IMR-90 (cell line): ENCODE measurements at regions of chr4 and their contacts with region 1.

Region 1: DNA sequence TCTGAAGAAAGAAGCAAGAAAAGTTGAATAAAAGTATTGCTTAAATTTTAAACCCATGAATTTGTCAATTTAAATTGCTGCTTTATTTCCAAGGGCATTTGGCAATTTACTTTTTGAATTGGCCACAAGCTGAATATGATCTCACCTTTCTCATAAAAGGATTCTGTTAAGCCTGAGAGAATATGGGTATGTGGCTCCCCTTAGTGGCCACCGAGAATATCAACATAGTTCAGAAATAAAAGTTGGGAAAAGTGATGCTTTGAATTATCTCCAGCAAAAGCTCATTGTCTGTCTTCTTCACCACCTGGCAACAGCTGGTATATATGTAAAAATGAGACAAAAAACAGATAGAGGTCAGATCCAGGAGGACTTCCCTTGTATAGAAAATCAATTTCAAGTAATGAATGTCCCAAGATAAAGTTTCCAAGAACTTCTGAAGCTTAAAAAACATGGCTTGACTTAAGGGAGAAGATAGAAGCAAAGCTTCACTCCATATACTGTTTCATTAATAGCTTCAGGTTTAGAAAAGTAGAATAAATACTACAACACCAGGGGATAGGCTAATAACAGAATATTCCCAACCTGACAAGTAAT is 290.7 kb upstream of the FAM241A start:
- DNase-seq: peak; percentile 30
- ATAC-seq: peak; percentile 69
- H3K4me3 ChIP-seq: no peak overlapping the region
- H3K27ac ChIP-seq: no peak overlapping the region
- H3K4me1 ChIP-seq: no peaks in the 10 kb centered on the region
- H3K27me3 ChIP-seq: no peaks in the 10 kb centered on the region
- CTCF ChIP-seq: peak; percentile 64
- POLR2A ChIP-seq: no peak
- RAD21 ChIP-seq: peak; percentile 63

Region 2: DNA sequence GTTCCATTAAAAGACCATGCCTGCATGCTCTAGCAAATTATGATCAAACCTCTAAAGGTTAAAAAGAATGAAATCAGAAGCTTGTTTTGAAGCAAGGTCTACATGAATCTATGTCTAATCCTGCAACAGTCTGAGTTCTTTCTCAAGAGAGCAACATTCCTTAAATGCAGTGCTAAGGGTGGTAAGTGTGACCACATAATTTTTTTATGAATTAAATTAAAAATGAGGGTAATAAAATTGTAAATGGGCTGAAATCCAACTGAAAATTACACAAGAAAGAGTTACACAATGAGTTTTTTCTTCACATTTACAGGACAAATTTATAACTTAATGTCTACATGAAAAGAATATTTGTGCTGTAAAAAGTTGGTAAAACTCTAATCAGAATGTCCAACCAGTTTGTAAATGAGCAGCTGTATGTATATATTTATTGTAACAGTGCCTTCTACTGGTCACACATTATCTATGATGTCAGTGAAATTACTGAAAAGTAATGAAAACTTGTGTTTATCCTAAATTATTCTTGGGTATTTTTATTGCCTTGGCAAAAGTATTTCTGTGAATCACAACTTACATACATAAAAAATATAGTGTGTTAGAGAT is 895.4 kb before region 1 on chr4:
- CTCF ChIA-PET with region 1: no interaction called
- POLR2A ChIA-PET with region 1: no interaction called
- dilution Hi-C with region 1: no loop called
- in situ Hi-C with region 1: no loop called
- intact Hi-C with region 1: loop called (anchors 10 kb)
- DNase-seq: peak; percentile 30
- ATAC-seq: peak; percentile 66; the same call in 1 of the 2 replicates
- H3K4me3 ChIP-seq: no peak overlapping the region
- H3K27ac ChIP-seq: no peak overlapping the region
- H3K4me1 ChIP-seq: no peaks in the 10 kb centered on the region
- H3K27me3 ChIP-seq: peaks cover 2% of the 10 kb centered on the region; the same call in 1 of the 2 replicates
- CTCF ChIP-seq: peak; percentile 50
- POLR2A ChIP-seq: no peak
- RAD21 ChIP-seq: peak; percentile 48

Region 3: DNA sequence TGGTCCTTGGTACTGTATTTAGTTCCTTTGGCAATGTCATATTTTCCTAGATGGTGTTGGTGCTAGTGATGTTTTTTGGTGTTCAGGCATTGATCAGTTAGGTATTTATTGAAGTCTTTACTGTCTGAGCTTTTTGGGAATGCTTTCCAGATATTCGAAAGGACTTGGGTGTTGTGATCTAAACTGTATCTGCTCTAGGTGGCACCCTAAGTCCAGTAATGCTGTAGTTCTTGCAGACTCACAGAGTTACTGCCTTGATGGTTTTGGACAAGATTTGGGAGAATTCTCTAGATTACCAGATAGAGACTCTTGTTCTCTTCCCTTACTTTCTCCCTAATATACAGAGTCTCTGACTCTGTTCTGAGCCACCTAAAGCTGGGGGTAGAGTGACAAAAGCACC is 718.2 kb before region 1 on chr4:
- CTCF ChIA-PET with region 1: no interaction called
- POLR2A ChIA-PET with region 1: no interaction called
- dilution Hi-C with region 1: no loop called
- in situ Hi-C with region 1: no loop called
- intact Hi-C with region 1: loop called (anchors 5 kb)
- DNase-seq: peak; percentile 59
- ATAC-seq: peak; percentile 73
- H3K4me3 ChIP-seq: no peak overlapping the region
- H3K27ac ChIP-seq: no peak overlapping the region
- H3K4me1 ChIP-seq: no peaks in the 10 kb centered on the region
- H3K27me3 ChIP-seq: no peaks in the 10 kb centered on the region
- CTCF ChIP-seq: peak; percentile 60
- POLR2A ChIP-seq: no peak
- RAD21 ChIP-seq: peak; percentile 75

Region 4: DNA sequence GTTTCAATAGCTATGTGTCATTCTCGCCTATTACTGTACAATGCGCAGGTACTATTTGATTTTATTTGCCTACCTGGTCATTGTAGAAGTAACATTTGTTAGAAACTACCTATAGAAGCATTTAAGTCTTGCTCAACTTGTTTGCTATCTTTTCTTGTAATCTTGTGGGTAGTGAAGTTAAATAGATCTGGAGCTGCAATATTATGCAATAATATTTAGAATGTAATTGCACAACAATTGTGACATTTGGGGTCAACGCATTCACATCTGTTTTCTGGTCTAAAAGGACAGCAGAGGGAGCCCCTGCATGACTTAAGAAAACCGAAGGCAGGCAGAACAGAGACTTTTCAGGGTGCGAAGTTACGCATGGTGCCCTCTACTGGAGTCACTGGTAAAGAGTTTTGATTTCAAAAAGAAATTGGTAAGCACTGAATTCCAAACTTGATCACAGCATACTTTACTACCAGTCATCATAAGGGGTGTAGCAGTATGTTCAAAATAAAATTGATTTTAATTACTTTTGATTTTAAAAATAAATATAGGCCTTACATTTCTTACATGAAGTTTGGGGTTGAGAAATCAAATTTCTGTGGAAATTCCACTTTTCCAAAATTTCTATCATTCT is 212.5 kb before region 1 on chr4:
- CTCF ChIA-PET with region 1: interaction called, 4 read pairs
- POLR2A ChIA-PET with region 1: no interaction called
- dilution Hi-C with region 1: no loop called
- in situ Hi-C with region 1: loop called (anchors 10 kb)
- intact Hi-C with region 1: loop called (anchors 1 kb)
- DNase-seq: peak; percentile 86
- ATAC-seq: peak; percentile 91
- H3K4me3 ChIP-seq: no peak overlapping the region
- H3K27ac ChIP-seq: no peak overlapping the region
- H3K4me1 ChIP-seq: no peaks in the 10 kb centered on the region; the same call in 1 of the 2 replicates
- H3K27me3 ChIP-seq: no peaks in the 10 kb centered on the region
- CTCF ChIP-seq: peak; percentile 94
- POLR2A ChIP-seq: no peak
- RAD21 ChIP-seq: peak; percentile 63

Region 5: DNA sequence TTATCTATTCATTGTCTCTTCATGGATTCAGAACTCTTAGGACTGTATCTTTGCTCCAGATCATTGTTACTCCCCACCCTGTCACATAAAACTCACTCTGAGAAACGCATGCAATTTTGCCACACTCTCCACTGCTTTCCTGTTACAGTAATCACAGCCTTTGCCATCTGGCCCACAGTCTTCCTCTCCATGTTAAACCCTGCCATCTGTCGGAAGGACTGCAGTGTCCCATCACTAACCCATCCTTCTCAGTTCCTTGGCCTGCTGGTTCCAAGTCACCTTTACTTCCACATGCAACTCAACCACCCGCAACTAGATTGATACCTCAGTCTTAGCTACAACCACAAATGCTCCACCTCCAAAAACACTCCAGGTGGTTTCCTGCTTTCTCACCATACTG is 18.0 kb before region 1 on chr4:
- CTCF ChIA-PET with region 1: interaction called, 11 read pairs
- POLR2A ChIA-PET with region 1: no interaction called
- dilution Hi-C with region 1: no loop called
- in situ Hi-C with region 1: no loop called
- intact Hi-C with region 1: no loop called
- DNase-seq: no peak
- ATAC-seq: no peak
- H3K4me3 ChIP-seq: no peak overlapping the region
- H3K27ac ChIP-seq: no peak overlapping the region
- H3K4me1 ChIP-seq: no peaks in the 10 kb centered on the region
- H3K27me3 ChIP-seq: no peaks in the 10 kb centered on the region
- CTCF ChIP-seq: no peak
- POLR2A ChIP-seq: no peak
- RAD21 ChIP-seq: no peak

Region 6: DNA sequence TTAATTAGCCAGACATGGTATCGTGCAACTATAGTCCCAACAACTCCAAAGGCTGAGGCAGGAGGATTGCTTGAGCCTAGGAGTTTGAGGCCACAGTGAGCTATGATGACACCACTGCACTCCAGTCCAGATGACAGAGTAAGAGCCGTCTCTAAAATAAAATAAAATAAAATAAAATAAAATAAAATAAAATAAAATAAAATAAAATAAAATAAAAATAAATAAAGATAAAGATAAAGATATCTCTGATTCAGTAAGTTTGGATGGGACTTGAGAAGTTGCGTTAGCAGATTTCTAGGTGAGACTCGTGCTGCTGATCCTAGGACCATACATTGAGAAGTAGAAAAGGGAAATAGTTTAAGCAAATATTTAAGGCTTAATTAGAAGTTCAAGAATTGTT is 35.8 kb after region 1 on chr4:
- CTCF ChIA-PET with region 1: no interaction called
- POLR2A ChIA-PET with region 1: no interaction called
- dilution Hi-C with region 1: no loop called
- in situ Hi-C with region 1: no loop called
- intact Hi-C with region 1: no loop called
- DNase-seq: no peak
- ATAC-seq: no peak
- H3K4me3 ChIP-seq: no peak overlapping the region
- H3K27ac ChIP-seq: no peak overlapping the region
- H3K4me1 ChIP-seq: no peaks in the 10 kb centered on the region
- H3K27me3 ChIP-seq: no peaks in the 10 kb centered on the region
- CTCF ChIP-seq: no peak
- POLR2A ChIP-seq: no peak
- RAD21 ChIP-seq: no peak

Region 7: DNA sequence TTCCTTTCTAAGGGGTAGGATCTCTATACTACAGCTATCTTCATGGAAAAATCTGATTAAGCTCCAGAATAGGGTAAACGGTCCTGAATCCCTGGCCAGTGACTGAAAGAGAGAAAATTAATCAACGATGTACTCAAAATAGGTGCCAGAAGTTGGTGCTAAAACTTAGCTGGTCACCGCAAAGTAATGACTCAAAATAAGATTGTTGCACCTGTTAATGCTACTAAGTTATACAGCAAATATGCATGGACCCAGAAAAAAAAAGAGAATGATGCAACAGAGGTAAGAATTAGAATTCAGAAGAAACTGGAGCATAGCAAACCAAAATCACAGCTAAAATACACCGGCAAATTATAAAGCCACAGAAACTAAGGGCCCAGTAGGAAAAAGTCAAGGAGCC is 50.9 kb after region 1 on chr4:
- CTCF ChIA-PET with region 1: no interaction called
- POLR2A ChIA-PET with region 1: no interaction called
- dilution Hi-C with region 1: no loop called
- in situ Hi-C with region 1: no loop called
- intact Hi-C with region 1: no loop called
- DNase-seq: no peak
- ATAC-seq: no peak
- H3K4me3 ChIP-seq: no peak overlapping the region
- H3K27ac ChIP-seq: no peak overlapping the region
- H3K4me1 ChIP-seq: no peaks in the 10 kb centered on the region
- H3K27me3 ChIP-seq: no peaks in the 10 kb centered on the region
- CTCF ChIP-seq: no peak
- POLR2A ChIP-seq: no peak
- RAD21 ChIP-seq: no peak

Region 8: DNA sequence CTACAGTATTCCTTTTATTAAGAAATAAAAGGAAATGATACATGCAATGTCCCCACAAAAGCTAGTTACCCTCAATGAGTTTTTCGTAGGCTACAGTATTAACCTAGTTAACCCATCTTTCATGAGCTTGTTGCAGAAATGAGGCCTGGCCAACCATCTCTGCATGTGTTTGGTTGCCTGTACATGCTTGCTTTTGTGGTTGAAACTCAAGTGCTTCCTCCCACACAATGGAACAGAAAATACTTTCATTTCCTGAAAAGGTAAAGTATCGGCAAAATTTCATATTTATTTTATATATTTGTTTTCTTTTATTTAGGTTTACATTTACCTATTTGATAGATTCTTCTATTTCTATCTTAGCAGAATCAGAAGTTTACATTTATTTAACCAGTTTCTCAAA is 76.1 kb after region 1 on chr4:
- CTCF ChIA-PET with region 1: no interaction called
- POLR2A ChIA-PET with region 1: no interaction called
- dilution Hi-C with region 1: no loop called
- in situ Hi-C with region 1: no loop called
- intact Hi-C with region 1: no loop called
- DNase-seq: no peak
- ATAC-seq: no peak
- H3K4me3 ChIP-seq: no peak overlapping the region
- H3K27ac ChIP-seq: no peak overlapping the region
- H3K4me1 ChIP-seq: no peaks in the 10 kb centered on the region
- H3K27me3 ChIP-seq: no peaks in the 10 kb centered on the region
- CTCF ChIP-seq: no peak
- POLR2A ChIP-seq: no peak
- RAD21 ChIP-seq: no peak

Region 9: DNA sequence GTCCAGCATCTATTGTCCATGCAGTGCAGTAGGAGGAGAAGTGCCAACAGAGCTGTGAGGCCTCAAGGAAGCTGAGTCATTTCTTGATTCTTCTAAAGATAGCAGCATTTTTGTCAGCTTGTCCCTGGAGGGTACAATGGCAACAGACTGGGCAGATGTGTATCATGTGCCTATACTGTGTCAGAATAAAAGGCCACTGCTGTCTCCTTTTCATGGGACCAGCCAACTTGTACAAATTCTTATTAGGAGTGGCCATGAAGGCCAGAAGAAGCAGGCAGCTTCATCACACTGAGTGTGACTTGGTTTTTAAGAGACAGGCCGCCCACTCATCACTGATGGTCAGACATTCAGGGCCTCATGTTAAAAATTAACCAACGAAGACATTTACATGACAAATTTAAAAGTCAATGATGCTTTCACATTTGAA is 105.7 kb after region 1 on chr4:
- CTCF ChIA-PET with region 1: no interaction called
- POLR2A ChIA-PET with region 1: no interaction called
- dilution Hi-C with region 1: no loop called
- in situ Hi-C with region 1: no loop called
- intact Hi-C with region 1: no loop called
- DNase-seq: no peak
- ATAC-seq: no peak
- H3K4me3 ChIP-seq: no peak overlapping the region
- H3K27ac ChIP-seq: no peak overlapping the region
- H3K4me1 ChIP-seq: no peaks in the 10 kb centered on the region
- H3K27me3 ChIP-seq: no peaks in the 10 kb centered on the region
- CTCF ChIP-seq: no peak
- POLR2A ChIP-seq: no peak
- RAD21 ChIP-seq: no peak

Region 10: DNA sequence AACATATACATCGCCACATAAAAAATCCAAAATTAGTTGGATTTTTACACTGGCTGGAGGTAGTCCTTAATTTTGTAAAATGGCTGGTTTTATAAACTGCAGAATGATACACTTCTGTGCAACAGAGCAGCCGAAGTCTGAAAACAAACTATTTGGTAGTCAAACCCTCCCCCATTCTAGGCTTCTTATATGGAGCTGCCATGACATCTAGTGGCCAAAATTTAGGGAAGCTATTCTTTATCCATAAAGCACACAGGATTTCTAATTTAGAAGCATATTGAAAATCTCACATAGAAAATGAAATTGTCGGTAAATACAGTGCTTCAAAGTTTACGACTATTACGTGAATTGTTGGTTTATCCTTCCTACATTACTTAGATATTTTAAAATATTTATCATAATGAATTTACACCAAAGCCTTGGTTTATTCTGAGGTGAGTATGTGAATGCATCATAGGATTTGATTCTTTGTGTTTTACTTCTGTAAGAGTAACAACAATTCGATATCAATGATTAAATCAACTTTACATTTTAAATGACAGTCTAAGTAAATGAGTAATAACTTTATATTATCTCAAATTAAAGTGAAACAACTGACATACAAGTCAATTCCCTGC is 177.2 kb after region 1 on chr4:
- CTCF ChIA-PET with region 1: no interaction called
- POLR2A ChIA-PET with region 1: no interaction called
- dilution Hi-C with region 1: no loop called
- in situ Hi-C with region 1: no loop called
- intact Hi-C with region 1: loop called (anchors 2 kb)
- DNase-seq: peak; percentile 50
- ATAC-seq: peak; percentile 89
- H3K4me3 ChIP-seq: no peak overlapping the region
- H3K27ac ChIP-seq: no peak overlapping the region
- H3K4me1 ChIP-seq: no peaks in the 10 kb centered on the region
- H3K27me3 ChIP-seq: peaks cover 2% of the 10 kb centered on the region; the same call in 1 of the 2 replicates
- CTCF ChIP-seq: peak; percentile 69
- POLR2A ChIP-seq: no peak
- RAD21 ChIP-seq: peak; percentile 71